Activated CD8-positive, alpha-beta T cell treated with anti-CD3 and anti-CD28 coated beads for 36 hours (primary cell): ENCODE measurements at regions of chr13 and their contacts with region 1.

Region 1: GRCh38 chr13:19782049-19782726 is 557 bp downstream of the PSPC1 start:
- DNase-seq: peak; percentile 64
- ATAC-seq: peak; percentile 47
- H3K4me3 Mint-ChIP-seq: peak overlapping the region; percentile 82
- H3K27ac Mint-ChIP-seq: peak overlapping the region; percentile 97
- H3K4me1 Mint-ChIP-seq: peaks cover 5% of the 10 kb centered on the region
- H3K27me3 Mint-ChIP-seq: no peaks in the 10 kb centered on the region
- CTCF ChIP-seq: no peak

Region 2: DNA sequence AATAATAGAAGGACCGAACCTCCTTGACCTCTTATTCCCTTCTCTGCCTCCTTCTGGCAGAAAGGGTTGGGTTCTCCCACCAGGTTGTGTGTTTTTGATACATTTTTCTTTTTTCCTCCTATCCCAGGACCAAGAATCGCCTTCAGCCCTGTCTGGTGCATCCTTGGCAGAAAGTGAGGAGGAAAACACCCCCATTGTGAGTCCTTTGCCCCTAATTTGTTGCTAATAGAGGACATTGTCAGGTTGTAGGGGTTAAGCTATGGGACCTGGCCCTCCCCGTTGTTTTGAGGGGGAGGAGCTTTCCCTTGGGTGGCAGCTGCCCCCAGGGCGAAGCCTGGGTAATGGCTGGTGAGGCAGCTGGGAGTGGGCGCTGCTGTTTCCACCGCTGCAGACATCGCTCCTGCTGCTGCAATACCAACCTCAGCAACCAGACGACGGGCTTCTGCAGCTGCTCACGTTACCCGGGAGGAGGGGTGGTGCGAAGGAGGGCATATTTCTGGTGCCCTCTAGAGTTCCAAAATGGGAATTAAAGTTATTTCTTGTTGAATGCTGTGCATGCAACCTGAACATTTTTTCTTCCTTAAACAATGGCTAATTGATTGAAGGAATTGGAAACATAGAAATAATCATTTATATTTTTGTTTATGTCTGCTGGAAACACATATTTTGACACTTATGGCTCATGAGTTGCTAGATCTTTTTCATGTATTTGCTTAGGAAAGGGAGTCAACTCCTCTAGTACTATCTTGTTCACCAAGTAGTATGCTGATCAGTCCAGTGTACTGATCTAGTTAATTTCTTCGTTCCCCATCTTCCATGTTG is 177.9 kb after region 1 on chr13:
- CTCF ChIA-PET with region 1: interaction called, 3 read pairs
- POLR2A ChIA-PET with region 1: no interaction called
- intact Hi-C with region 1: loop called (anchors 10 kb)
- DNase-seq: peak; percentile 93
- ATAC-seq: peak; percentile 58
- H3K4me3 Mint-ChIP-seq: peak overlapping the region; percentile 94
- H3K27ac Mint-ChIP-seq: peak overlapping the region; percentile 98
- H3K4me1 Mint-ChIP-seq: peaks cover 32% of the 10 kb centered on the region
- H3K27me3 Mint-ChIP-seq: no peaks in the 10 kb centered on the region
- CTCF ChIP-seq: peak; percentile 82